Astrocyte of the cerebellum (primary cell): ENCODE measurements at regions of chr5 and their contacts with region 1.

Region 1: DNA sequence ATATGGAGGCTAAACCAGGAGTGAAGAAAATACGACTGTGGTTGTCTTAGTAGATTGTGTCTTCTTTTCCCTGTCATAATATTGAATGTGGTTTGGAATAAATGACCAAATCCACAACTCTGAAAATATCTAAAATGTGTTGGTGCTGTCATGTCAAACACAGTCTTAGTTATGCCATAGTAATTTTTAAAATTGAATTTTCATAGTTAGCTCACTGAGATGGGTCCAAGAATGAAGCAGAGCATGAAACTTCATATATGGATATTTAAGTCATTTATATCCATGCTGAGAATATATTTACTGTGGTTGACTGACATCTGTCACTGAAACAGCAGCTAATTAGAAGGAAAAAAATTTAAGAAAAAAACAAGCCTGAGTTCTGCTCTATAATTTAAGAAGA is 260.4 kb upstream of the ATP10B start:
- DNase-seq: no peak
- H3K4me3 ChIP-seq: no peak overlapping the region
- CTCF ChIP-seq: no peak

Region 2: DNA sequence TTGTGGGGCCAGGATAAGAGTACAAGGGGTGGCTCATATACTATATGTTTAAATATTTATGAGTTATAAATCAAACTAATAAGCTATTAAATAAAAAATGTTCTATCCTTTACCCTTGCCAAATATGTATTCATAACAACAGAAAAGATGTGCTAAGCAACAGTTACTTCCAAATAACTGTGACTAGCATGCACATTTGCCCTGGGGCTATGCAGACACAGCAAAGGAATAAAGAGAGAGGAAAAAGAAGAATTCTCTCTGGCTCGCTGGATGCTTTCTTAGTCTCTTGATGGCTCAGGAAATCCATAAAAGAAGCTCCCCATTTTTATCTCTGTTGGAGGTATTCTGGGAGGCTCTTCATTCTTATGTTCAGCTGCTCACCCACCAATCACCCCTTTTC is 77.9 kb before region 1 on chr5:
- in situ Hi-C with region 1: loop called (anchors 5 kb)
- DNase-seq: no peak
- H3K4me3 ChIP-seq: no peak overlapping the region
- CTCF ChIP-seq: no peak

Region 3: GRCh38 chr5:161051920-161052500 is 60.4 kb before region 1 on chr5:
- in situ Hi-C with region 1: no loop called
- DNase-seq: no peak
- H3K4me3 ChIP-seq: no peak overlapping the region
- CTCF ChIP-seq: no peak

Region 4: GRCh38 chr5:161064781-161065180 is 47.6 kb before region 1 on chr5:
- in situ Hi-C with region 1: no loop called
- DNase-seq: no peak
- H3K4me3 ChIP-seq: no peak overlapping the region
- CTCF ChIP-seq: no peak

Region 5: GRCh38 chr5:161155461-161155860 is 43.1 kb after region 1 on chr5:
- in situ Hi-C with region 1: loop called (anchors 5 kb)
- DNase-seq: no peak
- H3K4me3 ChIP-seq: no peak overlapping the region
- CTCF ChIP-seq: no peak

Region 6: DNA sequence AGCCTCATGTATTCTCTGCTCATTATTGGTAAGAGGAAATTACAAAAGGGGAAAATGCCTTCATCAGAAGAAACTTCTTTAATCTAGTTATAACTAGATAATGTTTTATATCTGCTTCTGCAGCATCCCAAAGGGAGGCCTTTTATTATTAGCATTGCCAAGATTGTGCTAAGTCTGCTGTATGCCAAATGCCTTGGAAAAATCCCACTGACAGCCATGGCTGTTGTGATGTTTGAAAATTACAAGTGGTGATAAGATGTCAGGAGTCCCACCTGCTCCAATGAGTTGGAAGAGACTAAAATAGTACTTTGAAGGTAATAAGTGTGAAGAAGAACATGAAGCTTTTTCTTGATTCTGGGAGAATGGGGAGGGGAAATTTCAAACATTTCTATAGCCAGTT is 89.2 kb after region 1 on chr5:
- in situ Hi-C with region 1: no loop called
- DNase-seq: no peak
- H3K4me3 ChIP-seq: no peak overlapping the region
- CTCF ChIP-seq: no peak